MCF 10A (cell line): ENCODE measurements at regions of chr3 and their contacts with region 1.

Region 1: GRCh38 chr3:191356611-191357439 is 26.5 kb upstream of the UTS2B start:
- DNase-seq: peak; percentile 76
- H3K4me3 Mint-ChIP-seq: peak overlapping the region; percentile 45
- H3K27ac Mint-ChIP-seq: peak overlapping the region; percentile 89
- H3K4me1 Mint-ChIP-seq: peaks cover 43% of the 10 kb centered on the region
- H3K27me3 Mint-ChIP-seq: no peaks in the 10 kb centered on the region
- CTCF ChIP-seq: no peak

Region 2: GRCh38 chr3:191328962-191329653 is 27.7 kb before region 1 on chr3 and contains the start of gene CCDC50:
- CTCF ChIA-PET with region 1: no interaction called
- POLR2A ChIA-PET with region 1: interaction called, 17 read pairs
- intact Hi-C with region 1: loop called (anchors 2 kb)
- DNase-seq: peak; percentile 80
- H3K4me3 Mint-ChIP-seq: peak within 1 kb of the TSS; percentile 76
- H3K27ac Mint-ChIP-seq: peak within 1 kb of the TSS; percentile 91
- H3K4me1 Mint-ChIP-seq: peaks cover 38% of the 10 kb centered on the region
- H3K27me3 Mint-ChIP-seq: no peaks in the 10 kb centered on the region
- CTCF ChIP-seq: no peak
- total RNA-seq, gene CCDC50: 100 and 115 TPM in 2 replicates

Region 3: DNA sequence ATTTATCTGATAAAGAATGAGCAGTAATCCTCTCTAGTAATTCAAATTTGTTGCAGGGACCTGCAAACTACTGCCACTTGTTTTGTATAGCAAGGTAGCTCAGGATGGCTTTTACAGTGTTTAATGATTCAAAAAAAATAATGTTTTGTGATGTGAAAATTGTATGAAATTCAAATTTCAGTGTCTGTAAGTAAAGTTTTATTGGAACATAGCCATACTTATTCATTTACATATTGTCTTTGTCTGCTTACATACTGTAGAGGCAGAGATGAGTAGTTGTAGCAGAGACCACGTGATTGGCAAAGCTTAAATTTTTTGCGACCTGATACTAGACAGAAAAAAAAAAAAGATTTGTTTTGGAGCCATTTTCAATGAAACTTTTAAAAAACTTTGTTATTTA is 20.0 kb before region 1 on chr3:
- CTCF ChIA-PET with region 1: interaction called, 5 read pairs
- POLR2A ChIA-PET with region 1: interaction called, 17 read pairs
- intact Hi-C with region 1: no loop called
- DNase-seq: no peak
- H3K4me3 Mint-ChIP-seq: no peak overlapping the region
- H3K27ac Mint-ChIP-seq: peak overlapping the region; percentile 92
- H3K4me1 Mint-ChIP-seq: peaks cover 32% of the 10 kb centered on the region
- H3K27me3 Mint-ChIP-seq: no peaks in the 10 kb centered on the region
- CTCF ChIP-seq: no peak

Region 4: DNA sequence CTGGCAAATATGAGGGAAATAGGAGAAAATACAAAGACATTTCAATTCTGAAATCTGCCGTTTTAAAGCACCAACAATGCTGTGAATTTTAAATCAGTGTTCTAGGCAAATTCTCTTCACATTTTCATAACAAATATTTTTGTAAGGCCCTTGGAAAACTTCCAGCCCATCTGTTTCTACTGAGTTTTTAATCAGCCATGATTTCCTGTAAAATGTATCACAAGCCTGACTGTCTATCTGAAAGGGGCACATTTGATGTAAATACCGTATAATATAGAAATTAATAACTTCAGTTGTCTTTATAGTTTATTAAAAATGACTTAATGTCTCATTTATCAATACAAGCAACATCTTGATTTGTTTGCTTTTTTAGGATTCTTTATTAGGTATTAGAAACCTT is 558.9 kb after region 1 on chr3:
- CTCF ChIA-PET with region 1: no interaction called
- POLR2A ChIA-PET with region 1: no interaction called
- intact Hi-C with region 1: no loop called
- DNase-seq: no peak
- H3K4me3 Mint-ChIP-seq: no peak overlapping the region
- H3K27ac Mint-ChIP-seq: no peak overlapping the region
- H3K4me1 Mint-ChIP-seq: no peaks in the 10 kb centered on the region
- H3K27me3 Mint-ChIP-seq: no peaks in the 10 kb centered on the region
- CTCF ChIP-seq: no peak